HEK293 (cell line): ENCODE measurements at regions of chr5 and their contacts with region 1.

Region 1: GRCh38 chr5:6377905-6378765 is at the start of gene MED10:
- H3K4me3 ChIP-seq: peak within 1 kb of the TSS; percentile 97
- H3K27ac ChIP-seq: peak within 1 kb of the TSS; percentile 57; the same call in 1 of the 2 replicates
- H3K4me1 ChIP-seq: peaks cover 6% of the 10 kb centered on the region
- CTCF ChIP-seq: no peak

Region 2: GRCh38 chr5:6365977-6366590 is 12.1 kb before region 1 on chr5:
- CTCF ChIA-PET with region 1: interaction called, 3 read pairs
- POLR2A ChIA-PET with region 1: interaction called, 14 read pairs
- H3K4me3 ChIP-seq: no peak overlapping the region
- H3K27ac ChIP-seq: no peak overlapping the region
- H3K4me1 ChIP-seq: no peaks in the 10 kb centered on the region
- CTCF ChIP-seq: no peak